Mammary epithelial cell (primary cell): ENCODE measurements at regions of chr4 and their contacts with region 1.

Region 1: DNA sequence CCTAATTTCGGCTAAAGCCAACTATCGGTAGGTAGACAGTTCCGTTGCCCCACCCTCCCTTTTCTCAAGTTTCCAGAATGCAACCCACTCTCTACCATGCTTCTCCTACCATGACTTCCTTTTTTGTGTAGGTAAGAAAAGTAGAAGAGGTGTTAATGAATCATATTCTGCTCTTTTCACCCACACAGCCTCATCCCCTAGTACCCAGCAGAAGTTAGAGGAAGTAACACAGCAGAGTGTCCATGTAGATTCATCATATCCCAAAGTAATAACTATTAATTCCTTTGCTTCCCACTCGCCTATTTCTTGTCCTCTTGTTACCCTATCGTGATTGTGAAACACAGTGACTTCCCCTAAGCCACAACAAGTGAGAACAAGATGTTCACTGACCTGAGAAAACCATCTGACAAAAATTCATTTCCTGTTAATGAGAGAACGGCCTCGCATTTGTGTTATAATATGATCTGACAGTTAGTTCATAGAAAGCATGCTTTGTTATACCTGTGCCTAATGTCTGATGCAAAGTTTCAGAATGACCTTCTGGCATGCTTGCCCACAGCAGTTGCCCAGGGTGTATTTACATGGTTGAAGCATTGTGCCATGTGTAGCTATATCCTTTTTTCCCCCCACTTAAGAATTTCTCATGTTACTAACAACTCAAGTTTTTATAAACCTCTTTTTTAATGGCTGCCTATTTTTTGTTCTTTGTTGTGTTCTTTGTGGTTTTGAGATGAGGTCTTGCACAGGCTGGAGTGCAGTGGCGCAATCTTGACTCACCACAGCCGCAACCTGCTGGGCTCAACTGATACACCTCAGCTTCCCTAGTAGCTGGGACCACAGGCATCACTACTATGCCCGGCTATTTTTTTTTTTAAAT is 185.6 kb downstream of the RAP1GDS1 start:
- DNase-seq: peak; percentile 94
- H3K4me3 ChIP-seq: no peak overlapping the region
- H3K27ac ChIP-seq: peak overlapping the region; percentile 92
- H3K4me1 ChIP-seq: peaks cover 38% of the 10 kb centered on the region
- H3K27me3 ChIP-seq: no peaks in the 10 kb centered on the region
- CTCF ChIP-seq: no peak

Region 2: DNA sequence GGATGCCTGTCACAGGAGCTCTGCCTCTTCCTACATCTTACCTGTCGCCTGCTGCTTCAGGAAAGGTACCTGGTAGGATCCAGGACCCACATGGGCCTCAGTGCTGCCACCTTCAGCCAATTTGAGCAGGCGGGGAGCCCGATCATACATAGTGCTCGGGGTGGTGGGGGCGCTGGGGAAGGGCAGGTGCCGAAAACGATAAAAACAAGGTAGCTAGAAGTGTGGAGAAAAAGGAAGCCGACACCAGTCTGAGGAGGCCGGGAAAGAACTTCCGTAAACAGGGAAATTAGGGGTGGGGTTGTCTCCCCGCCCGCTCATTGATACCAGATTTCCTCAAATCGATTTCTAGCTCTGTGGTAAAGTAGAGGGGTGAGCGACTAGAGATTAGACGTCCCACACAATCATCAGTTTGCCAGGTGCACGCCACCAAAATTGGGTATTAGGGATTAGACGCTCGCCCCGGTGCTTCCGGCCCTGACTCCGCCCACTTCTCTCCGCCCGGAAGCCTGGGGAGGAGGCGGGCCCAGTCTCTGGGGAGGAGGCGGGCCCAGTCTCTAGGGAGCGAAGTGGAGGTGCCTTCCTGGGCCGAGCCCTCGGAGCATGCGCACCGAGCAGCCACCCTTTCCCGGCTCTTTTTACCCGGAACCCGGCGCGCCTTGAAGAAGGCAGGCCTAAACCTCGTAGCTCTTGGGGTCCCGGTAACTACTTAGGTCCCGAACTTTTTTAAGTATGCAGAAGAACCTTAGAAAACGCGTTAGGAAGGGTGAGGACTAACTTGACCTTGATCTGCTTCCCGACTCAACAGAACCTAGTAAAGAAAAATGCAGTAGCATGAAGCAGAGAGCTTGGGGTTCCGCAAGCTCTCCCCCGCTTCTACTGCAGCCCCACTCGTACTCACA is 303.5 kb before region 1 on chr4 and contains the start of gene STPG2:
- CTCF ChIA-PET with region 1: no interaction called
- dilution Hi-C with region 1: no loop called
- in situ Hi-C with region 1: no loop called
- intact Hi-C with region 1: loop called (anchors 5 kb)
- DNase-seq: peak; percentile 93
- H3K4me3 ChIP-seq: peak within 1 kb of the TSS; percentile 64 to 76 (median 69)
- H3K27ac ChIP-seq: peak within 1 kb of the TSS; percentile 78
- H3K4me1 ChIP-seq: peaks cover 12% of the 10 kb centered on the region
- H3K27me3 ChIP-seq: no peaks in the 10 kb centered on the region
- CTCF ChIP-seq: peak; percentile 53 to 73
- total RNA-seq, gene STPG2: 0.17 to 0.28 TPM

Region 3: DNA sequence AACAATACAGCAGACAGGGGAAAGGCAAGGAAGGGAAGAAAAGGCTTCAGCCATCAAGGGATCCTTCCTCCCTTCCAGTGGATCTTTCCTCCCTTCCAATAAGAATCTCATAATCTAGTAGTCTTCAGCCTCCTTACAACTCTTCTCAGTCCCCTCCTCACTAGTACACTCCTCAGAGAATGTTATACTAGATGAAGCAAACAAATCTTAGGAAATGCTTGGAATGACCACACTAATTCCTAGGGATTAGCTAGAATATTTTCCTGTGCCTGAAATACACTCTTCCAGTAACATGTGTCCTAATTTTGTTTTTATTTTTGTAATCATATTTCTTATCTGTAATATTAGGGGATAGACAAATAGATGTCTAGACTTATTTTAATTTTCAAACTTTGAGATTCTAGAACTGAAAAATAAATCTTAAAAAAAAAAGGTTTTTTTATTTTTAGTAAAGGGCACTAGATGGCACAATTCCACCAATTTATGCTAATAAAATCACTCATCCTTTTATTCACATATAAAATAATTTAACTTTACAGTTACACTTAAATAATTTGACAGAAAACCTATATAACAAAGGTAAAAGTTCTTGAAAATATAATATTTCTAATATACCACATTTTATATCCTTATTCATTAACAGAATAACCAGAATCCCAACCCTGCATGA is 296.5 kb before region 1 on chr4:
- CTCF ChIA-PET with region 1: no interaction called
- dilution Hi-C with region 1: no loop called
- in situ Hi-C with region 1: loop called in 1 of 2 experiments (anchors 25 kb)
- intact Hi-C with region 1: no loop called
- DNase-seq: no peak
- H3K4me3 ChIP-seq: no peak overlapping the region
- H3K27ac ChIP-seq: no peak overlapping the region
- H3K4me1 ChIP-seq: no peaks in the 10 kb centered on the region
- H3K27me3 ChIP-seq: no peaks in the 10 kb centered on the region
- CTCF ChIP-seq: peak in 1 of 2 donors; percentile 14

Region 4: DNA sequence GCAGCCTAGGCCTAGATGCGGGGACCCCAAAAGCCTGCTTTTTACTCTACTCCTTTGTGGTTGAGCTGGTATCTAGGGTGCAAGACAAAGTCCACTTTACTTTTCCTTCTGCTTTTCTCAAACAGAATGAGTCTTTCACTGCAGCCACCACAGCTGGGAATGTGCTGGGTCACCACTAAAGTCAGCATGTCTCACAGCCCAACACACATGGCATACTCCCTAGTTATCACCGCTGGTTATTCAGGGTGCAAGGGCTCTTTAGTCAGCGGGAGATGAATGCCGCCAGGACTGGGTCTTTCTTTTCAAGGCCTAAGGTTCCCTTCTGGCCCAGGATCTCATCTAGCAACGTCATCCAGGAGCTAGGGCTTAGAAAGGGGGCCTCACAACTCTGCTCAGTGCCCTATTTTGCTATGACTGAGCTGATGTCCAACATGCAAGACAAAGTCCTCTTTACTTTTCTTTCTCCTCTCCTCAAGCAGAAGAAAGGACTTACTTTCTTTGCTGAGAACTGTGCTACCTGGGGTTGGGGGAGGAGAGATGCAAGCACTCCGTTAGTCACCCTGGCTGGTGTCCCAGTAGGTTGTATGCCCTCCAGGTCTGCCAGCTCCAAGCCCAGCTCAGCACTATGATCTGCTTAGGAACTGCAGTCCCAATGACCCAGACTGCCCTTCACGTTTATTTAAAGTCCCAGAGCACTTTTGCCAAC is 280.6 kb before region 1 on chr4:
- CTCF ChIA-PET with region 1: no interaction called
- dilution Hi-C with region 1: no loop called
- in situ Hi-C with region 1: loop called in 1 of 2 experiments (anchors 25 kb)
- intact Hi-C with region 1: loop called (anchors 5 kb)
- DNase-seq: peak; percentile 84
- H3K4me3 ChIP-seq: no peak overlapping the region
- H3K27ac ChIP-seq: no peak overlapping the region
- H3K4me1 ChIP-seq: peaks cover 12% of the 10 kb centered on the region
- H3K27me3 ChIP-seq: no peaks in the 10 kb centered on the region
- CTCF ChIP-seq: no peak

Region 5: DNA sequence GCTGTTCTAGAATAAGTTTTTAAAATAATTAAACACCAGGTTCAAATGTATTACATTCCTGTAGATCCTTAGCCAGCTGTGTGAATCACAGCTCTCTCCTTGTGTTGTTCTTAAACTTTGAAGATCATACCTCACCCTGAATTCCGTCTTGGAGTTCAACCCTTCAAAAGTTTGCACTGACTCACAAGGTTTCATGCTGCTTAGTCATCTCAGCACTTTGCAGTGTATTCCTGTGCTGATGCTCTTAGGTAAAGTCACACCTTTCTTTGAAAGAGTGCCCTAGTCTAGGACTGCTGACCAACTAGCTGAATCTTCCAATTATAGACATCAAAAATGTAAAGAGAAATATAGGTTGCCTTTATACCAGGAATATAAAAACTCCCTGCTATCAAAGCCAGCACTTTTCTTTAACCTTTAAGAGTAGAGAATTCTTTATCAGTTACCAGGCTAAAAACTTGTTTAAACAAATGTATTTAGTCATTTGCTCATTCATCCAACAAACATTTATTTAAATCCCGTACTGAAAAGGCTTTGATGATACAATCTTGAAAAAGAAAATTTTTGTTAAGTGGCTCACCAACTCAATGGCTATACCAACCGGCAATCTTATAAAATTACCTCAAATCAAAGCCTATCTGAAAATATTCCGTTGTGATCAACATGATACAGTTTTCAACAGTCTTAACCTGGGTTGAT is 15.9 kb before region 1 on chr4:
- CTCF ChIA-PET with region 1: no interaction called
- dilution Hi-C with region 1: no loop called
- in situ Hi-C with region 1: no loop called
- intact Hi-C with region 1: loop called (anchors 1 kb)
- DNase-seq: peak; percentile 96
- H3K4me3 ChIP-seq: peak overlapping the region in 1 of 3 experiments; percentile 3
- H3K27ac ChIP-seq: peak overlapping the region; percentile 93
- H3K4me1 ChIP-seq: peaks cover 40% of the 10 kb centered on the region
- H3K27me3 ChIP-seq: no peaks in the 10 kb centered on the region
- CTCF ChIP-seq: no peak

Region 6: DNA sequence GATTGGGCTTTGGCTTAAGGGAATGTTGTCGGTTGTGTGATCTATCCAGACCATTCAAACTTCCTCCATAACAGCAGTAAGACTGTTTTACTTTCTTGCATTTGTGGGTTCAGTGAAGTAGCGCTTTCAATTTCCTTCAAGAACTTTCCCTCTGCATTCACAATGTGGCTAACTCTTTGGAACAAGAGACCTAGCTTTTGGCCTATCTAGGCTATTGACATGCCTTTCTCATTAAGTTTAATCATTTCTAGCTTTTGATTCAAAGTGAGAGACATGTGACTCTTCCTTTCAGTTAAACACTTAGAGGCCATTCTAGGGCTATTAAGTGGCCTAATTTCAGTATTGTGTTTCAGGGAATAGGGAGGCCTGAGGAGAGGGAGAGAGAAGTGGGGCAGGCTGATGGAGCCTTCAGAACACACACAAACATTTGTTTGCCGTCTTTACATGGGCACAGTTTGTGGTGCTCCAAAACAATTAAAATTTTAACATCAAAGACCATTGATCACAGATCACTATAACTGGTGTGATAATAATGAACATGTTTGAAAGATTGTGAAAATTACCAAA is 607.8 kb after region 1 on chr4:
- CTCF ChIA-PET with region 1: no interaction called
- dilution Hi-C with region 1: no loop called
- in situ Hi-C with region 1: no loop called
- intact Hi-C with region 1: no loop called
- DNase-seq: no peak
- H3K4me3 ChIP-seq: no peak overlapping the region
- H3K27ac ChIP-seq: no peak overlapping the region
- H3K4me1 ChIP-seq: peaks cover 13% of the 10 kb centered on the region
- H3K27me3 ChIP-seq: no peaks in the 10 kb centered on the region
- CTCF ChIP-seq: no peak